MCF 10A (cell line): ENCODE measurements at regions of chr15 and their contacts with region 1.

Region 1: GRCh38 chr15:41811432-41812195 is 16.3 kb upstream of the JMJD7 start:
- DNase-seq: peak; percentile 82
- H3K4me3 Mint-ChIP-seq: no peak overlapping the region
- H3K27ac Mint-ChIP-seq: no peak overlapping the region
- H3K4me1 Mint-ChIP-seq: peaks cover 8% of the 10 kb centered on the region
- H3K27me3 Mint-ChIP-seq: no peaks in the 10 kb centered on the region
- CTCF ChIP-seq: peak; percentile 87

Region 2: GRCh38 chr15:41557673-41558399 is 253.8 kb before region 1 on chr15:
- CTCF ChIA-PET with region 1: interaction called, 3 read pairs
- POLR2A ChIA-PET with region 1: no interaction called
- intact Hi-C with region 1: loop called (anchors 1 kb)
- DNase-seq: peak; percentile 55
- H3K4me3 Mint-ChIP-seq: peak overlapping the region; percentile 75
- H3K27ac Mint-ChIP-seq: no peak overlapping the region
- H3K4me1 Mint-ChIP-seq: no peaks in the 10 kb centered on the region
- H3K27me3 Mint-ChIP-seq: no peaks in the 10 kb centered on the region
- CTCF ChIP-seq: peak; percentile 69

Region 3: GRCh38 chr15:41603941-41604911 is 207.4 kb before region 1 on chr15:
- CTCF ChIA-PET with region 1: interaction called, 10 read pairs
- POLR2A ChIA-PET with region 1: no interaction called
- intact Hi-C with region 1: loop called (anchors 1 kb)
- DNase-seq: peak; percentile 81
- H3K4me3 Mint-ChIP-seq: peak overlapping the region; percentile 69
- H3K27ac Mint-ChIP-seq: peak overlapping the region; percentile 13
- H3K4me1 Mint-ChIP-seq: peaks cover 16% of the 10 kb centered on the region
- H3K27me3 Mint-ChIP-seq: no peaks in the 10 kb centered on the region
- CTCF ChIP-seq: peak; percentile 55

Region 4: DNA sequence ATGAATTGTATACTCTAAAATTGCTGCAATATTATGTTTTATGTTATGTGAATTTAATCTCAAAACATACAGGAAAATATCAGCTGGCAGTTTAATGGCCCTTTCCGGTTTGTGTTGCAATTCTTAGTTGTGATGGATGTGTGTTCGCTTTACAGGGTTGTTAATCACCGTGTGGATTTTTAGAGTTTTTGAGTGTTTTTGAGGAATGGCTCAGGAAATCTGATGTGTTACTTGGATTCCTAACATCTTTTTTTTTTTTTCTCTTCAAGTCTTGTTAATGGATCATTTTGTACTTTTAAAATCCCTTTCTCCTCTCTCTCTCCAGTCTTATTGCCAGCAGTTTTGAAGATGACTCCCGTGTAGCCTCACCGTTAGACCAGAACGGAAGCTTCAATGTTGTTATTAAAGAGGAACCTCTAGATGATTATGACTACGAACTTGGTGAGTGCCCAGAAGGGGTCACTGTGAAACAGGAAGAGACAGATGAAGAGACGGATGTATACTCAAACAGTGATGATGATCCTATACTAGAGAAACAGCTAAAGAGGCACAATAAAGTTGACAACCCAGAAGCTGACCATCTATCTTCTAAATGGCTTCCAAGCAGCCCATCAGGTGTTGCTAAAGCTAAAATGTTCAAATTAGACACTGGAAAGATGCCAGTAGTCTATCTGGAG is 115.7 kb before region 1 on chr15:
- CTCF ChIA-PET with region 1: interaction called, 4 read pairs
- POLR2A ChIA-PET with region 1: interaction called, 4 read pairs
- intact Hi-C with region 1: loop called (anchors 1 kb)
- DNase-seq: peak; percentile 55
- H3K4me3 Mint-ChIP-seq: no peak overlapping the region
- H3K27ac Mint-ChIP-seq: no peak overlapping the region
- H3K4me1 Mint-ChIP-seq: peaks cover 14% of the 10 kb centered on the region
- H3K27me3 Mint-ChIP-seq: no peaks in the 10 kb centered on the region
- CTCF ChIP-seq: no peak

Region 5: GRCh38 chr15:41779662-41780157 is 31.9 kb before region 1 on chr15:
- CTCF ChIA-PET with region 1: interaction called, 249 read pairs
- POLR2A ChIA-PET with region 1: interaction called, 486 read pairs
- intact Hi-C with region 1: loop called (anchors 1 kb)
- DNase-seq: no peak
- H3K4me3 Mint-ChIP-seq: no peak overlapping the region
- H3K27ac Mint-ChIP-seq: peak overlapping the region; percentile 74
- H3K4me1 Mint-ChIP-seq: peaks cover 53% of the 10 kb centered on the region
- H3K27me3 Mint-ChIP-seq: no peaks in the 10 kb centered on the region
- CTCF ChIP-seq: no peak